ENCODE measurements at regions of chr4 and their contacts with region 1.

Region 1: GRCh38 chr4:107719922-107720722 is at the start of gene PAPSS1:
- DNase-seq: peak; percentile 94
- ATAC-seq: peak; percentile 89
- H3K4me3 Mint-ChIP-seq: peak within 1 kb of the TSS; percentile 92
- H3K27ac Mint-ChIP-seq: peak within 1 kb of the TSS; percentile 94
- H3K4me1 Mint-ChIP-seq: peaks cover 35% of the 10 kb centered on the region
- H3K27me3 Mint-ChIP-seq: no peaks in the 10 kb centered on the region
- CTCF ChIP-seq: no peak
- total RNA-seq, gene PAPSS1: 29.5 to 31.1 TPM

Region 2: DNA sequence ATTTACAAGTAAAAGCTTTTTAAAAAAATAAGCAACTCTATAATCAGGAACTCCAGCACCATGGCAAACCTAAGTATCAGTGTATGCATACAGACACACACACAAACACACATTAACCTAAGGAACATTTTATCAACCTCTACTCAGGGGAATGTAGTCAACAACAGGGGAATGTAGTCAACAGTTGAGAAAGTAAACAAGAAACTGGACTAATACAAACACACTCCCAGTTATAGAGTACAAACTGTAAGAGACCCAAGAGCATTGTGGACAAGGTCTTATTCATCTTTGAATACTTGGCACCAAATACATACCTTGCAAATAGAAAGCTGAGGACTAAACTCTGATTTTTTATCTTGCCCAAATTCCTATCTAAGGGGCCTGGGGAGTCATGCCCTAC is 36.2 kb before region 1 on chr4:
- CTCF ChIA-PET with region 1: no interaction called
- POLR2A ChIA-PET with region 1: no interaction called
- intact Hi-C with region 1: no loop called
- DNase-seq: no peak
- ATAC-seq: no peak
- H3K4me3 Mint-ChIP-seq: no peak overlapping the region
- H3K27ac Mint-ChIP-seq: no peak overlapping the region
- H3K4me1 Mint-ChIP-seq: no peaks in the 10 kb centered on the region
- H3K27me3 Mint-ChIP-seq: no peaks in the 10 kb centered on the region
- CTCF ChIP-seq: no peak

Region 3: DNA sequence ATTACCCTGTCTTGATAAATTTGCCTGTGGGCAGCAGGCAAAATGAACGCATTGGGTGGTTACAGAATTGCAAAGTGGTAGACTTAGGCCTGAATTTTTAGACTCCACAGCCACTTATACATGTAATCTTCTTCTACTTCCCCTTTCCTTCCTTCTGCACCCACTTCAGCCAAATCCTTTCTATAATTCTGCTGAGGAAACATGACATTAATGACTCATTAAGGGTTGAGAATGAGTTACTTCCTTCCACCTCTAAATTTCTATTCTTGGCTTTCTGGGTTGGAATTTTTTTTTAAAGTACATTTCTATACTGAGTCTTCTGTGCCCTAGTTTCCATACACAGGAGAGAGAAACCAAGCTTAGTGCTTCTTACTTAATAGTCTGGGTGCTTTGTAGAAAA is 10.2 kb before region 1 on chr4:
- CTCF ChIA-PET with region 1: interaction called, 11 read pairs
- POLR2A ChIA-PET with region 1: interaction called, 4 read pairs
- intact Hi-C with region 1: no loop called
- DNase-seq: no peak
- ATAC-seq: peak; percentile 24
- H3K4me3 Mint-ChIP-seq: no peak overlapping the region
- H3K27ac Mint-ChIP-seq: no peak overlapping the region
- H3K4me1 Mint-ChIP-seq: peaks cover 18% of the 10 kb centered on the region
- H3K27me3 Mint-ChIP-seq: no peaks in the 10 kb centered on the region
- CTCF ChIP-seq: no peak

Region 4: DNA sequence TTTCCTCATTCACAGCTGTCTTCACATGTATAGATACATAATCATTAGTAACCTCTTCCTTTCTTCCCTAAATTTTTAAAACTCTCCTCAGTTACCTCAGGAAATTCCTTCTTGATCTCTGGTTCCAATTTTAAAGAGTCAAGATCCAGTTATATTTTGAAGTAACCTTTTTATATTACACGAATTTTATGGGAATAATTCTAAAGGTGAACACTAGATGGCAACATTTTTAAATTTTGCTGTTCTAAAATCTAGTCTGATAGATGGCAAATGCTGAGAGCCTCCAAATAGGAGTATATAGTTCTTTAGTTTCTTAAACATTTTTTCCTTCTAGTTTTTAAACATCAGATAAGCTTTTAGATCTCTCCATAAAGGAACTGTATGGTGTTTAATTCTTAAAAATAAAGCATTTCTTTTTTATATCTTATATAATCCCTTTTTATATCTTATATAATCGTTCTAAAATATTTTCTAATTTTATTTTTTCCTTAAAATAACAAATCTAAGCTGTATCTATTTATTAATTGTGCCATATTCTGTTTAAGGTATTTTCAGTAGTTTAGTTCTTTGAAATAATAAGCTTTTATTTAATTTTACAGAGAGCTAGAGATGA is 37.8 kb after region 1 on chr4:
- CTCF ChIA-PET with region 1: interaction called, 11 read pairs
- POLR2A ChIA-PET with region 1: no interaction called
- intact Hi-C with region 1: no loop called
- DNase-seq: no peak
- ATAC-seq: no peak
- H3K4me3 Mint-ChIP-seq: no peak overlapping the region
- H3K27ac Mint-ChIP-seq: no peak overlapping the region
- H3K4me1 Mint-ChIP-seq: no peaks in the 10 kb centered on the region
- H3K27me3 Mint-ChIP-seq: peaks cover 11% of the 10 kb centered on the region
- CTCF ChIP-seq: peak; percentile 85